Activated B cell treated with CpG ODN at 0.5 μM for 24 hours (primary cell): ENCODE measurements at regions of chr1 and their contacts with region 1.

Region 1: DNA sequence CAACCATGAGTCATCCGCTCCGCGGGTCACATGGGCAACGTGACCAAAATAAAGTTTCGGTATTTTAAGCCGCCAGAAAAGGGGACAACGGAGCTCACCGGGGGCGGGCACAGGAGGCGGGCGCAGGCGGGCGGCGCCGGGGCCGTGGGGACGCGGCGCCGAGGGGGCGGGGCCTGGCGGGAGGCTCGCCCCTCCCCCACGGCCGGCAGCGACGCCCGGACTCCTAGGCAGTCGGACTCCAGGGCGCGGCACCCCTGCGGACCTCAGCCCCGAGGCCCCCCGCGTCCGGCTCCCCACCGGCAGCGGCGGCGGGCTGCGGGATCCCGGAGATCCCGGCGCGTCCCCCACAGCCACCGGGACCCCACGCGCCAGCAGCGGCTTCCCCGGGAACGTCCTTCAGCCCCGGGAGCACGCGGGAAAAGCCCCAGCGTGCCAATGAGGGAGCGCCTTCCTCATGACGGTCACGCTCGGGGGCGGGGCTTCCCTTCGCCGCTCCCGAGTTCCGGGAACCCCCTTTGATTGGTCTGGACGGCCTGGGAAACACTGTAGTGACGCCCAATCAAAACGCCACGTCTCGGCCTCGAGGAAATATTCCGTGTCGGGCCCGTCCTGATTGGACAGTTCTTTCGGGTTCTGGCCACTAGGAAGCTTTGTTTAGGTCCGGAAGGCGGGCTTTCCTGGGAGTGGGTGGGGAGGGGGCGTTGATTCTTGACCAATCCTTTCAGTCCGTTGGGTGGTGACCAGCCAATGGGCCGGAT is 515 bp upstream of the CAMTA1 start:
- DNase-seq: peak; percentile 98
- ATAC-seq: peak; percentile 81
- H3K4me3 Mint-ChIP-seq: peak overlapping the region; percentile 90
- H3K27ac Mint-ChIP-seq: peak overlapping the region; percentile 89
- H3K4me1 Mint-ChIP-seq: peaks cover 51% of the 10 kb centered on the region
- H3K27me3 Mint-ChIP-seq: no peaks in the 10 kb centered on the region
- CTCF ChIP-seq: no peak

Region 2: GRCh38 chr1:6141592-6141991 is 643.1 kb before region 1 on chr1:
- CTCF ChIA-PET with region 1: no interaction called
- POLR2A ChIA-PET with region 1: no interaction called
- intact Hi-C with region 1: no loop called
- DNase-seq: no peak
- ATAC-seq: peak; percentile 45
- H3K4me3 Mint-ChIP-seq: no peak overlapping the region
- H3K27ac Mint-ChIP-seq: no peak overlapping the region
- H3K4me1 Mint-ChIP-seq: no peaks in the 10 kb centered on the region
- H3K27me3 Mint-ChIP-seq: peaks cover 9% of the 10 kb centered on the region
- CTCF ChIP-seq: no peak

Region 3: DNA sequence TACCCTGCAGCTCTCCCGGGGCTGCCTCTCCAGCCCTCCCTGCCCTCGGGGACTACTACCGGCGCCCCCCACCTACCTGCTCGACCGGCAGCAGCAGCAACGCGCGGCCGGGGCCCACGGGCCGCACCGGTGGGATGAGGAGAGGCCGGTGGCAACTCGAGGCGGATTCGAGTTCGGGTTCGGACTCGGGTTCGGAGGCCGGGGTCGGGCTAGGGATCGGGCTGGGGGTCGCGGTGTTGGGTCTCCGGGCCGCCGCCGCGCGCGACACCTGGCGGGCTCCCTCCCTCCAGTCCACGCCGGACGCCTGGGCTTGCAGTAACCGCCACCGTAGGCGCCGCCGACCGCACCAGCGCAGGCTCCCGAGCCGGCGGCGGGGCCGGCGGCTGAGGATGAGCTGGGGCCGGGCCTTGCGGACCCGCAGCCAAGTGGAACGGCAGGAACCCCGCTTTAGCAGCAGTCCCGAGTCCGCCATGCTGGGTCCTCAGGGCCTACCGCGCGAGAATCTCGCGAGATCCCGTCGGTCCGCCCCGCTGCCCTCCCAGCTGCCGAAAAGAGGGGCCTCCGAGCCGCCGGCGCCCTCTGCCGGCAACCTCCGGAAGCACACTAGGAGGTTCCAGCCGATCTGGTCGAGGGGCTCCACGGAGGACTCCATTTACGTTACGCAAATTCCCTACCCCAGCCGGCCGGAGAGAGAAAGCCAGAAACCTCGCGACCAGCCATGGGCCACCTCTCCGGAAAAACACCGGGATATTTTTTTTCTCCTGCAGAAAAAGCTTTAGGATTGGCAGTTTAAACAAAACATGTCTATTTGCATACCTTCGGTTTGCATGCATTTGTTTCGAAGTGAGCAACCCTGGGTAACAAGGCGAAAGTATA is 230.5 kb before region 1 on chr1 and contains the start of gene NOL9:
- CTCF ChIA-PET with region 1: no interaction called
- POLR2A ChIA-PET with region 1: interaction called, 5 read pairs
- intact Hi-C with region 1: loop called (anchors 2 kb)
- DNase-seq: peak; percentile 98
- ATAC-seq: peak; percentile 98
- H3K4me3 Mint-ChIP-seq: peak within 1 kb of the TSS; percentile 85
- H3K27ac Mint-ChIP-seq: peak within 1 kb of the TSS; percentile 84
- H3K4me1 Mint-ChIP-seq: peaks cover 21% of the 10 kb centered on the region
- H3K27me3 Mint-ChIP-seq: no peaks in the 10 kb centered on the region
- CTCF ChIP-seq: peak; percentile 62
- total RNA-seq, gene NOL9: 43.6 and 58.6 TPM in 2 replicates

Region 4: DNA sequence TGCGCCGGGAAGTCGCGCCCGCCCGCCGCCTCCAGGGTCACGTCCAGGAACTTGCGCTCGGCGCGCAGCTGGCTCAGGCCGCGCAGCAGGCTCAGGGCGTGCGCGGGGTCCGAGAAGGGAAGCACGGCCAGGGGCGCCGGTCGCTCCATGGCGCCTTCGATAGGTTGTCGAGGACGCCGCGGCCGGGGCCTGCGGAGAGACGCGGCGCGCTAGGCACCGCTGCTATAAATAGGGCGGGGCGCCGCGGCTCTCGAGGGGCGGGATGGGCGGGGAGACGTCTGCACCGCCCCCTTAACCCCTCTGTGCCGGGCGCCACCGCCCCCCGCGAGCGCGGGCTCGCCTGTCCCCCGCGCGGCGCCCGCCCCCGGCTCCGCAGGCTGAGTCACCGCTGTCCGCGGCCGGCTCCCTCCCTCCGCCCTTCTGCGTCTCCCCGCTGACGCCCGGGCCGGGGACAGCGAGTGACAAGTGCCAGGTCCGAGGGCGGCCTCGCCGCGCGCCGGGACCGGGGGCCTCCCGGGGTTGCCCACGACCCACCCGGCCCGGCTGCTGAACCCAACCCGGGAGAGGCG is 182.0 kb before region 1 on chr1 and contains the start of gene KLHL21:
- CTCF ChIA-PET with region 1: no interaction called
- POLR2A ChIA-PET with region 1: interaction called, 12 read pairs
- intact Hi-C with region 1: loop called (anchors 1 kb)
- DNase-seq: peak; percentile 86
- ATAC-seq: peak; percentile 70
- H3K4me3 Mint-ChIP-seq: peak within 1 kb of the TSS; percentile 91
- H3K27ac Mint-ChIP-seq: peak within 1 kb of the TSS; percentile 96
- H3K4me1 Mint-ChIP-seq: peaks cover 40% of the 10 kb centered on the region
- H3K27me3 Mint-ChIP-seq: no peaks in the 10 kb centered on the region
- CTCF ChIP-seq: no peak
- total RNA-seq, gene KLHL21: 14.6 and 15.9 TPM in 2 replicates

Region 5: GRCh38 chr1:6701437-6702153 is 83.1 kb before region 1 on chr1 and contains the start of gene DNAJC11:
- CTCF ChIA-PET with region 1: interaction called, 4 read pairs
- POLR2A ChIA-PET with region 1: interaction called, 13 read pairs
- intact Hi-C with region 1: loop called (anchors 1 kb)
- DNase-seq: peak; percentile 99
- ATAC-seq: peak; percentile 95
- H3K4me3 Mint-ChIP-seq: peak within 1 kb of the TSS; percentile 92
- H3K27ac Mint-ChIP-seq: peak within 1 kb of the TSS; percentile 88
- H3K4me1 Mint-ChIP-seq: peaks cover 21% of the 10 kb centered on the region
- H3K27me3 Mint-ChIP-seq: no peaks in the 10 kb centered on the region
- CTCF ChIP-seq: peak; percentile 28
- total RNA-seq, gene DNAJC11: 57.0 and 65.6 TPM in 2 replicates

Region 6: GRCh38 chr1:6743189-6744101 is 41.3 kb before region 1 on chr1:
- CTCF ChIA-PET with region 1: no interaction called
- POLR2A ChIA-PET with region 1: interaction called, 8 read pairs
- intact Hi-C with region 1: loop called (anchors 5 kb)
- DNase-seq: peak; percentile 16
- ATAC-seq: peak; percentile 50
- H3K4me3 Mint-ChIP-seq: no peak overlapping the region
- H3K27ac Mint-ChIP-seq: no peak overlapping the region
- H3K4me1 Mint-ChIP-seq: peaks cover 12% of the 10 kb centered on the region
- H3K27me3 Mint-ChIP-seq: peaks cover 7% of the 10 kb centered on the region
- CTCF ChIP-seq: no peak

Region 7: GRCh38 chr1:7104339-7104738 is 319.6 kb after region 1 on chr1:
- CTCF ChIA-PET with region 1: no interaction called
- POLR2A ChIA-PET with region 1: no interaction called
- intact Hi-C with region 1: no loop called
- DNase-seq: no peak
- ATAC-seq: no peak
- H3K4me3 Mint-ChIP-seq: no peak overlapping the region
- H3K27ac Mint-ChIP-seq: no peak overlapping the region
- H3K4me1 Mint-ChIP-seq: no peaks in the 10 kb centered on the region
- H3K27me3 Mint-ChIP-seq: peaks cover 4% of the 10 kb centered on the region
- CTCF ChIP-seq: no peak

Region 8: DNA sequence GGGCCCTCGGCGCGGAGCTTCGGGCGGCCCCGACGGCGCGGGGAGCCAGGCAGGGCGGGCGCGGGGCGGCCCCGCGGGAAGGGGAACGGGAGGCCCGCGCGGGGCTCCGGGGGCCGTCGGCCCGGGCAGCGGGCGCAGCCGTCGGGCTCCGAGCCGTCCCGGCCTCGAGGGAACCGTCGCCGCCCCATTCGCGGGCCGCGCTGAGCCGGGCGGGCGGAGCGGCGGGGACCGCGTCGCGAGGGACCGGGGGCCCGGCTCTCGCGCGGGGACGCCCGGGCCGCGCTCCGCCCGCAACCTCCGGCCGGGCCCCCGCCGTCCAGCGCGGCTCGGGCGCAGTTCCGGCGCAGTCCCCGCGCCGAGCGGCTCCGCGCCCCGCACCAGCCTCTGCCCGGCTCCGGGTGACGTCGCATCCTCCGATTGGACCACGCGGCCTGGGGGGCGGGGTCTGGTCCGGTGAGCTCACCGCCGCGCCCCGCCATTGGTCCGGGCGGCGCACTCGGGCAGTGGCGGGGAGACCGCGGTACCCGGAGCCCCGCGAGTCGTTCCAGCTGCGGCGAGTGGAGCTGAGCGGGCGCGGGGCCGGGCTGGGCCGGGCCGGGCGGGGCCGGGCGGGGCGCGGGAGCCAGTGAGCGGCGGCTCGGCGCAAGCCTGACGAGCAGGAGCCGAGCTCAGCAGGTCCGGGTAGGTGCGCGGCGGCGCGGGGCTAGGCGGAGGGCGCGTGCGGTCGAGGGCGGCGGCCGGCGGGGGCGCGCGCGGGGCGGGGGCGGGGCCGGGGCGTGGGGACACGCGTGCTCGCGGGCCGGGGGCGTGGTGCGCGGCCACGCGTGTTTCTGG is 919.7 kb after region 1 on chr1:
- CTCF ChIA-PET with region 1: no interaction called
- POLR2A ChIA-PET with region 1: no interaction called
- intact Hi-C with region 1: loop called (anchors 10 kb)
- DNase-seq: peak; percentile 99
- ATAC-seq: peak; percentile 98
- H3K4me3 Mint-ChIP-seq: peak overlapping the region; percentile 82
- H3K27ac Mint-ChIP-seq: no peak overlapping the region
- H3K4me1 Mint-ChIP-seq: peaks cover 12% of the 10 kb centered on the region
- H3K27me3 Mint-ChIP-seq: peaks cover 11% of the 10 kb centered on the region
- CTCF ChIP-seq: no peak